MCF 10A (cell line): ENCODE measurements at regions of chr16 and their contacts with region 1.

Region 1: GRCh38 chr16:10954903-10955302 is 10.5 kb downstream of the CLEC16A start:
- DNase-seq: no peak
- H3K4me3 Mint-ChIP-seq: no peak overlapping the region
- H3K27ac Mint-ChIP-seq: no peak overlapping the region
- H3K4me1 Mint-ChIP-seq: peaks cover 18% of the 10 kb centered on the region
- H3K27me3 Mint-ChIP-seq: no peaks in the 10 kb centered on the region
- CTCF ChIP-seq: no peak

Region 2: DNA sequence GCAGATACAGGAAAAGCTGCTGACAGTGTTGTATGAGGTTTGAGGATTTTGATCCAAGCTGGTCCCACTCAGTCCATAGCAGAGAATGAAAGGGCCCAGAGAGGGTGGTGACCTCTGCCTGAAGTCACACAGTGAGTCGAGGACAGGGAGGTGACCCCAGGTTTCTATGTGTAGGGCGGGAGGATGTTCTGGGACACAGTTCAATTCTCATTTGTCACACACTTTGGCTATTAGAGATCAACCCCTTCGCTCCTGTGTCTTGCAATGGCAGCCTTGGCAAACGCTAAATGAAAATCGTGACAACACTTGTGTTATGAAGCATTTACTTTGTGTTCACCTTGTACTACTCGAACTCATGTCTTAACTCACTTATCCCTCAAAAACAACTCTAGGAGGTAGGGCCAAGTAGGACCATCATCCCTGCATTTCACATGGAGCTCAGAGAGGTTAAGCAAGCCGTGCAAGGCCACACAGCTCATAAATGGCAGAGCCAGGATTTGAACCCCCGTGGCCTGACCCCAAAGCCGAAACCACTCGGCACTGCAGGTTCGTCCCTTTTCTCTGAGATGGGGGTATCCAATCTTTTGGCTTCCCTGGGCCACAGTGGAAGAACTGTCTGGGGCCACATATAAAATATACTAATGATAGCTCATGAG is 22.8 kb before region 1 on chr16:
- CTCF ChIA-PET with region 1: no interaction called
- POLR2A ChIA-PET with region 1: no interaction called
- intact Hi-C with region 1: no loop called
- DNase-seq: no peak
- H3K4me3 Mint-ChIP-seq: no peak overlapping the region
- H3K27ac Mint-ChIP-seq: no peak overlapping the region
- H3K4me1 Mint-ChIP-seq: no peaks in the 10 kb centered on the region
- H3K27me3 Mint-ChIP-seq: no peaks in the 10 kb centered on the region
- CTCF ChIP-seq: no peak

Region 3: DNA sequence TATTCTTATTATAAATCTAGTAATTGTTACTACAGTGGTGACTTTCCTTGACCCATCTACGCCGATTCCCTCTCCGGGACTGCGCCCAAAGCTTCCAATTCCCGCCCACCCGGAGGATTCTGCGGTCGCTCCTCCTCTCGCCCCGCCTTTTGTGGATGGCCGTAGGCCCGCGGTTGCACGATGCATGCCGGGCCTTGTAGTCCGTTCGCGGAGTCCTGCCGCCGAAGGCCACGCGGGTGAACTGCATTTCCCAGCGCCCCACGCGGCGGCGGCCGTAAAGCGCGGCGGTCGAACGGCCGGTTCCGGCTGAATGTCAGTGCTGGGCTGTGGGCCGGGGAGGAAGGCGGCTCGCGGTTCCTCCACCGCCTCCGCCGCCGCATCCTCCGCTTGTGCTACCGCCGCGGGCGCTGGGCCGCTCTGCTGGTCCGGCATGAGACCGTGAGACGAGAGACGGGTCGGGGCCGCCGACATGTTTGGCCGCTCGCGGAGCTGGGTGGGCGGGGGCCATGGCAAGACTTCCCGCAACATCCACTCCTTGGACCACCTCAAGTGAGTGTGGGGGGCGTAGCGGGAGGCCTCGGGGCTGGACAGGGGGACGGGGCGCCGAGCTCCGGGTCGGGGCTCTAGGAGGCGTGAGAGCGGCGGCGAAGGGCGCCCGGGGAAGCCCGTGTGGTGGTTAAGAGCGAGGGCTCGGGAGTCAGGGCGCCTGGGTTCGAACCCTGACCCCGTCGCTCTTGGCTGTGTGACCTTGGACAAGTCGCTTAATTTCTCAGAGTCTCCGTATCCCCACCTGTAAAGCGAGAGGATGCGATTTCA is 10.4 kb before region 1 on chr16 and contains the start of gene CLEC16A:
- CTCF ChIA-PET with region 1: interaction called, 15 read pairs
- POLR2A ChIA-PET with region 1: interaction called, 11 read pairs
- intact Hi-C with region 1: no loop called
- DNase-seq: peak; percentile 95
- H3K4me3 Mint-ChIP-seq: peak within 1 kb of the TSS; percentile 94
- H3K27ac Mint-ChIP-seq: peak within 1 kb of the TSS; percentile 66
- H3K4me1 Mint-ChIP-seq: peaks cover 56% of the 10 kb centered on the region
- H3K27me3 Mint-ChIP-seq: no peaks in the 10 kb centered on the region
- CTCF ChIP-seq: no peak
- total RNA-seq, gene CLEC16A: 29.1 and 32.4 TPM in 2 replicates

Region 4: DNA sequence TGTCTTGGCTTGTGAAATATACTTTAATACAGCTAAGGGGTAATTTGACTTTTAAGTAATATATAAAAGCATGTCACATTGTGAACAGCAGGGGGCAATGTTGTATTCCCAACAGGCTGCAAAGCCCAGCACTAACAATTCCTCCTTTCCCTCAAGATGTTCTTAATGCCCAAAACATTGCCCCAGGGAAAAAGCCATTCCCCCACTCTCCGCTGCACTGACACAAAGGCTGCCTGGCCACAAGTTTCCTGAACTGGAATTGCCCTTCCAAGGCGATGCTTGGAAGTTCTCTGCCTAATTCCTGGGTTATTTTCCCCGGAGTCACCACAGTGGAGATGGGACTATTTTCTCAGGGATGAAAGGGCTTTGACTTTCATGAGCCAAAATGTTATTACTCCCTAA is 16.7 kb after region 1 on chr16:
- CTCF ChIA-PET with region 1: interaction called, 115 read pairs
- POLR2A ChIA-PET with region 1: interaction called, 5 read pairs
- intact Hi-C with region 1: no loop called
- DNase-seq: peak; percentile 69
- H3K4me3 Mint-ChIP-seq: no peak overlapping the region
- H3K27ac Mint-ChIP-seq: no peak overlapping the region
- H3K4me1 Mint-ChIP-seq: peaks cover 5% of the 10 kb centered on the region
- H3K27me3 Mint-ChIP-seq: no peaks in the 10 kb centered on the region
- CTCF ChIP-seq: peak; percentile 72